ENCODE measurements at regions of chr17 and their contacts with region 1.

Region 1: GRCh38 chr17:61412143-61412859 is 12.7 kb downstream of the TBX2 start:
- DNase-seq: peak; percentile 65
- H3K4me3 ChIP-seq: peak overlapping the region; percentile 52 to 55
- H3K27ac ChIP-seq: peak overlapping the region; percentile 95 to 98
- H3K4me1 ChIP-seq: no peaks in the 10 kb centered on the region
- H3K27me3 ChIP-seq: no peaks in the 10 kb centered on the region
- CTCF ChIP-seq: peak; percentile 97 to 99 (median 98)
- POLR2A ChIP-seq: no peak

Region 2: DNA sequence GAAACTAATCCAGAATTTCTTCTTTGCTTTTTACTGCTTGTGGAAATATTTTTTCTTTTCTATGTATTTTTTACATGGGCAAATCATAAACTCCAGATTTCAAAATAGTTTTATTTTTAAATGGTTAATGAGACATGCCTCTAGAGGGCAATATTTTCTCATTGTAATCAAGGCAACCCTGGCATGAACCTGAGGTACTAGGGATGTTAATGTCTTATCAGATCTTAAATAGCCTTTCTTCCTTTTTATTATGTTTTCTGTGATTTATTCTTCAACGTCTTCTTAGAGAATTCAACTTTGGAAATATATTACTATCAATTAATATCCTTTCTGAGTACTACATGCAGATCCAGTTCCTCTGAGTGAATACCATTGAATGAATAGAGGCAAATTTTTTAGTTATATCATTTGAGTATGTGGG is 410.0 kb before region 1 on chr17:
- intact Hi-C with region 1: loop called (anchors 5 kb)
- DNase-seq: no peak
- H3K4me3 ChIP-seq: no peak overlapping the region
- H3K27ac ChIP-seq: no peak overlapping the region
- H3K4me1 ChIP-seq: no peaks in the 10 kb centered on the region
- H3K27me3 ChIP-seq: no peaks in the 10 kb centered on the region
- CTCF ChIP-seq: peak; percentile 14 to 66 (median 57)
- POLR2A ChIP-seq: no peak

Region 3: GRCh38 chr17:61451538-61452300 is 39.4 kb after region 1 on chr17:
- intact Hi-C with region 1: loop called (anchors 5 kb)
- DNase-seq: no peak
- H3K4me3 ChIP-seq: peak overlapping the region; percentile 11 to 34
- H3K27ac ChIP-seq: peak overlapping the region in 1 of 2 donors; percentile 64
- H3K4me1 ChIP-seq: no peaks in the 10 kb centered on the region
- H3K27me3 ChIP-seq: peaks cover 27% of the 10 kb centered on the region
- CTCF ChIP-seq: no peak
- POLR2A ChIP-seq: no peak

Region 4: GRCh38 chr17:61551255-61551742 is 139.0 kb after region 1 on chr17:
- intact Hi-C with region 1: loop called (anchors 2 kb)
- DNase-seq: no peak
- H3K4me3 ChIP-seq: no peak overlapping the region
- H3K27ac ChIP-seq: no peak overlapping the region
- H3K4me1 ChIP-seq: no peaks in the 10 kb centered on the region
- H3K27me3 ChIP-seq: no peaks in the 10 kb centered on the region
- CTCF ChIP-seq: peak in 3 of 4 experiments; percentile 40 to 79 (median 73)
- POLR2A ChIP-seq: no peak

Region 5: DNA sequence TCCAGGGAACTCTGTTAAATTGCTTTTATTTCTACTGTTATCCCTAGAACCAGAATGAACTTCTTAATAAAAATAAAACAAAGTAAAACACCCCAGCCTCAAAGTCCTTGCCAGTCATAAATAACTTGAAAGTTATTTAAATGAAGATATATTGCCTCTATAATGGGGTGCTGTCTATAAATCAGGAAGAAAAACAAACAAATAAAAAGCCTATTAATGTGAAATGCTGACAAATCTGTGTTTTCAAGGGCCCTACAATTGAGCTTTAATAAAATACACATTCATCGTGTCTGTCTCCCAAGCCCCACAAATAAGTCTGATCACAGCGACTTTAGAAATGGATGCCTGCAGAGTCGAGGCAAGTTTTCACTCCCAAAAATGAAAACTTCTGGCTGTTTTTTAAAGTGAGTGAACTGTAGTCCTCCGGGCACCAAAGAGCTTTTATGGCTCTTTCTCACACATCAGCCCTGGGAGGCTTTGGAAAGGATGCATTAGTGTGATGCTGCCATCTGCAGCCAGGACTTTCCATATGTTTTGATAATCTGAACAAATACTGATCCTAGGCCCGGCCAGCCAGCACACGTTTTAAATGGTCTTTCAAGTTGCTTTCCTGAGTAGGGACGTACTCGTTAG is 162.4 kb after region 1 on chr17:
- intact Hi-C with region 1: loop called (anchors 2 kb)
- DNase-seq: peak; percentile 62
- H3K4me3 ChIP-seq: no peak overlapping the region
- H3K27ac ChIP-seq: no peak overlapping the region
- H3K4me1 ChIP-seq: no peaks in the 10 kb centered on the region
- H3K27me3 ChIP-seq: no peaks in the 10 kb centered on the region
- CTCF ChIP-seq: peak in 3 of 4 experiments; percentile 27 to 53 (median 50)
- POLR2A ChIP-seq: no peak

Region 6: DNA sequence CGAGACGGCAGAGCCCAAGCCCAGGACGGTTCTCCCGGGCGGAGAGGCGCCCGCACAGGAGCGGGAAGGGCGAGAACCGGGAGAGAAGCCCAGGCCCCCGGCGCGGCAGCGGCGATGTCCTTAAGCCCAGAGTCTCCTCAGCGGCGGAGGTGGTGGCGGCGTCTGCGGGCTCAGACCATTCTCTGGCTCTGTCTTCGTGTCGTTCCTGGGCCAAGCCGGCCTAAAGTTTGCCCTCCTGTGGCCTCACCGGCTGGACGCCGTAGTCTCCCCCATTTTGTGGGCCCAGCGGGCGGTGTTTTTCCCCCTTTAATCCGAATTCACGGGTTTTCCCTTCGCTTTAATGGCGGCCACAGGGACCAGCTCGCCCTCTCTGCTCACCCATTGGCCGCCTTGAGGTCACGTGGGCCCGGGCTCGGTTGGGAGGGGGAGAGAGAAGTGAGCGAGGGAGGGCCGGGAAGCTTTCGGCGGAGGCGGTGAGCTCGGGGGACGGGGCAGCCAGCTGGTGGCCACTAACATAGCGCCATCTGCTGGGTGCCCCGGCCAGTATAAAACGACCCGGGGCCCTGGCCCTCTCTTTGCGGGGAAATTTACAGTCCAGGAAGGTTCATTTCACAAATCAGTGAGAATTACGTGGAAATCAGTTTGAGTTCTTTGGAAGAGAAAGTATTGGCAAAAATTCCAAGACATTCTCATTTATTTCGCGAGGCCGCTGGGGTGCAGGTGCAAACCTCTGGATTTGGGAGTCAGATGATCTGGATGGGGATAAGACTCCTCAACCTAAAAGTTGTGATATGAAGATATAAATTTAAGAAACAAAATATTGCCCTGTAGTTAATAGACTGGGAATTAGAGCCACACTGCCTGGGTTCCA is 653.5 kb after region 1 on chr17:
- intact Hi-C with region 1: loop called (anchors 1 kb)
- DNase-seq: peak; percentile 98
- H3K4me3 ChIP-seq: peak overlapping the region; percentile 89 to 92
- H3K27ac ChIP-seq: peak overlapping the region; percentile 97 to 99
- H3K4me1 ChIP-seq: no peaks in the 10 kb centered on the region
- H3K27me3 ChIP-seq: no peaks in the 10 kb centered on the region
- CTCF ChIP-seq: peak; percentile 80 to 96 (median 96)
- POLR2A ChIP-seq: peak; percentile 88

Measured in prostate gland (tissue), 2 donors.